ENCODE measurements at regions of chr10 and their contacts with region 1.

Region 1: DNA sequence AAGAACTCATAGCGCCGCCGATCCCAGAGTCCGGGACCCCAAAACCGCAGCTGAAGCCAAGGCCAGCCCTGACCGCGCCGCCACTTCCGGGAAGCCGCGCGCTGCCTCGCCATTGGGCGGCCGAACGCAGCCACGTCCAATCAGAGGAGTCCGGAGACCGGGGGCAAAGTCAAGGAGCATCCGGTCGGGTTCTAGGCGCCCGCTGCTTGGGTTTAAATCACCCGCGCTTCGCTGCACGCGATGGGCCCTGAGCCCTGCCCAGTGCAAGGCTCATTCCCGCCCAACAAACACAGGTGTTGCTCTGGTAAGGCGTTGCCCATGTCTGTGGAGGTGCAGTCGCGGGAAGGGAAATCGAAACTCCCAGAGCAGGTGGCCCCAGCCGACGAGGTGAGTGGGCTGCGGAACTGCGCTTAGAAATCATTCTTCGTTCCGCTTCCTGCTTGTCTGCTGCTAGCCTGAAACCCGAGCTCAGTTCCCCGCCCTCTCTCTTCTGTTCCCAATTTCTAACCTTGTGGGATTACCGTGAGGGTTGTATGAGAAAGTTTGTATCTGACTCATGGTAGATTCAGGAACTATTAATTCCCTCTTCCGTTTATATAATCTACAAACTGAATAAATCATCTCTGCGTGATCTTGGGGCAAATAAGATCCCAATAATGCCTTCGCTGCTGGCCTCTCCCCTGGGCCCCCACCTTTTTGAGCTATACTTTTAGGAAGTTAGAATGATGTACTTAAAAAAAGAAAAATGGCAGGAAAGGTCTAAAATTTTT is at the start of gene DCLRE1C:
- DNase-seq: peak; percentile 91 to 94
- ATAC-seq: peak; percentile 97 to 99 (median 98)
- H3K4me3 ChIP-seq: peak within 1 kb of the TSS; percentile 85
- H3K27ac ChIP-seq: peak within 1 kb of the TSS; percentile 89
- H3K4me1 ChIP-seq: peaks cover 8% of the 10 kb centered on the region
- H3K27me3 ChIP-seq: no peaks in the 10 kb centered on the region
- CTCF ChIP-seq: no peak
- total RNA-seq, gene DCLRE1C: 2.4 to 3.0 (median 2.6) TPM

Region 2: GRCh38 chr10:14787938-14788337 is 166.2 kb before region 1 on chr10:
- intact Hi-C with region 1: no loop called
- DNase-seq: no peak
- ATAC-seq: no peak
- H3K4me3 ChIP-seq: no peak overlapping the region
- H3K27ac ChIP-seq: no peak overlapping the region
- H3K4me1 ChIP-seq: no peaks in the 10 kb centered on the region
- H3K27me3 ChIP-seq: no peaks in the 10 kb centered on the region
- CTCF ChIP-seq: no peak

Region 3: DNA sequence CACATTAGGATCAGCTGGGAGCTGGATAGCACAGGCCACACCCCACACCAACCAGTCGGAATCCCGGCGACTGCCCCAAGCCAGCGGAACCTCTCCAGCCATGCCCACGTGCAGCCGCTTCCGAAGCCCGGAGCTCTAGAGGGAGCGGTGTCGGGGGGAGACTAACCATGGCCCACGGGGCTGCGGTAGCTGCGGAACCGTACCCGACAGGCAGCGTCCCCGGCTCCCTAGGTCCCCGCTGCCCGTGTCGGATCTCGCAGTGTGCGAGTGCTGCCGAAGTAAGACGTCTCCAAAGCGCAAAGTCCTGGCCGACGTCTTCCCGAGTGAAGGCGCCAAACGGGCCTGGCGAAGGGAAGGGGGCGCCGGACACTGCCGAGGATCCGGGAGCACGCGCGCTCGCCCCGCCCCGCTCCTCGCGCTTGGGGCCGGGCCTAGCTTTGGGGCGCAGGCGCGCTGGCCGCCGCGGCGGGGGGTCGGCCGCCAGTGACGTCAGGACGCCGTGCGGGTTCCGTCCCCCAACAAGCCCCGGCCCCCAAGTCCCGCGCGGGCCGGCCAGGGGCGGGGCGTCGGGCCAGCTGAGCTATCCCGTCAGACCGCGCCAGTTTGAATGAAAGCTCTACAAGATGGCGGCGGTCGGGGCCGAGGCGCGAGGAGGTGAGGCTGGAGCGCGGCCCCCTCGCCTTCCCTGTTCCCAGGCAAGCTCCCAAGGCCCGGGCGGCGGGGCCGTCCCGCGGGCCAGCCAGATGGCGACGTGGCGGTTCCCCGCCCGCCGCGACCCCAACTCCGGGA is 75.7 kb before region 1 on chr10 and contains the start of gene SUV39H2:
- intact Hi-C with region 1: loop called (anchors 5 kb)
- DNase-seq: peak; percentile 97 to 98
- ATAC-seq: peak; percentile 92 to 97 (median 94)
- H3K4me3 ChIP-seq: peak within 1 kb of the TSS; percentile 88
- H3K27ac ChIP-seq: peak within 1 kb of the TSS; percentile 99
- H3K4me1 ChIP-seq: peaks cover 38% of the 10 kb centered on the region
- H3K27me3 ChIP-seq: no peaks in the 10 kb centered on the region
- CTCF ChIP-seq: no peak
- total RNA-seq, gene SUV39H2: 4.4 to 7.9 (median 6.2) TPM

Region 4: DNA sequence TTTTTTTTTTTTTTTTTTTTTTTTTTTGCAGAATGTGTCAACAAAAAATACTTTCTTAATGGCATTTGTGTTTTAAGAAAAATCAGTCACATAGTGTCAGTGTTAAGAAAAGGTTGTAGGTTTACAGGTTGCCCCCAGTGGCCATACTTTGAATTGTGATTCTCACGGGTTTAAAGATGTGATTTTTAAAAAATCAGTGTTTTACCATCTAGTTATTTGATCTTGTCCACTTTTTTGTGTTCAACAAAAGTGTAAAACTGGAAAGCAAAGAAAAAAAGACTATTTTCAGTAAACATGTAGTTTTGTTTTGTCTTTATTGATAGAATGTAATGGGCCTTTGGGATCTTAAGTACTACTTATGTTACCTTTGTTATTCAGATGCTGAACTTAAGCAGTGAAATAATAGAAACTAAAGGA is 49.9 kb before region 1 on chr10:
- intact Hi-C with region 1: no loop called
- DNase-seq: no peak
- ATAC-seq: peak in 1 of 4 donors; percentile 60
- H3K4me3 ChIP-seq: no peak overlapping the region
- H3K27ac ChIP-seq: no peak overlapping the region
- H3K4me1 ChIP-seq: no peaks in the 10 kb centered on the region
- H3K27me3 ChIP-seq: no peaks in the 10 kb centered on the region
- CTCF ChIP-seq: peak; percentile 47

Region 5: GRCh38 chr10:15227611-15228368 is 273.6 kb after region 1 on chr10:
- intact Hi-C with region 1: no loop called
- DNase-seq: no peak
- ATAC-seq: no peak
- H3K4me3 ChIP-seq: no peak overlapping the region
- H3K27ac ChIP-seq: no peak overlapping the region
- H3K4me1 ChIP-seq: no peaks in the 10 kb centered on the region
- H3K27me3 ChIP-seq: no peaks in the 10 kb centered on the region
- CTCF ChIP-seq: no peak